ENCODE measurements at regions of chr2 and their contacts with region 1.

Region 1: GRCh38 chr2:61910603-61911002 is 5.1 kb downstream of the COMMD1 start:
- DNase-seq: no peak
- H3K4me3 ChIP-seq: no peak overlapping the region
- H3K27ac ChIP-seq: no peak overlapping the region
- H3K4me1 ChIP-seq: peaks cover 0 to 49% (median 17%) of the 10 kb centered on the region in 6 donors
- H3K27me3 ChIP-seq: no peaks in the 10 kb centered on the region
- CTCF ChIP-seq: no peak
- POLR2A ChIP-seq: no peak

Region 2: GRCh38 chr2:62195421-62196277 is 285.0 kb after region 1 on chr2 and contains the start of gene B3GNT2:
- intact Hi-C with region 1: loop called (anchors 10 kb)
- DNase-seq: peak; percentile 96
- H3K4me3 ChIP-seq: peak within 1 kb of the TSS; percentile 85 to 98 (median 92)
- H3K27ac ChIP-seq: peak within 1 kb of the TSS; percentile 90 to 99 (median 96)
- H3K4me1 ChIP-seq: peaks cover 32 to 56% (median 45%) of the 10 kb centered on the region in 6 donors
- H3K27me3 ChIP-seq: no peaks in the 10 kb centered on the region
- CTCF ChIP-seq: no peak
- POLR2A ChIP-seq: peak in 2 of 3 donors; percentile 31 to 69
- total RNA-seq, gene B3GNT2: 21.3 to 40.3 (median 28.9) TPM

Region 3: DNA sequence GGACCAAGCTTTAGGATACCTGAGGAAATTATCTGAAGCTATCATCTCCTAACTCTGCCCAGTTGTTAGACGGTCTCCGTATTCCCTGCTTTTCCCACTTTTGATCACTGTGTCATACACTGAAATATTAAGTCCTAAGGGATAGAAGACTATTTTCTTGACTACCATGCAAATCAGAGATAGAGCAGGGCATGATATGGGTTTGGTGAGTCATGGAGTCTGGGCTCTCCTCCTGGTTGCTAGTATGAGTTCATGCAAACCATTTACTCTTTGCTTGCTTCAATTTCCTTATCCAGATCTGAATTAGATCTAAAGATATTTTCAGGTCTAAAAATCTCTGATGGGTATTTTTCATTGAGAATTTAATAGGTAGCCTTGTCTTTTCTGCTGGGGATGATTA is 850.0 kb after region 1 on chr2:
- intact Hi-C with region 1: loop called (anchors 10 kb)
- DNase-seq: no peak
- H3K4me3 ChIP-seq: no peak overlapping the region
- H3K27ac ChIP-seq: no peak overlapping the region
- H3K4me1 ChIP-seq: no peaks in the 10 kb centered on the region
- H3K27me3 ChIP-seq: no peaks in the 10 kb centered on the region
- CTCF ChIP-seq: no peak
- POLR2A ChIP-seq: no peak